Left cardiac atrium (tissue), 4 donors: ENCODE measurements at regions of chr20 and their contacts with region 1.

Region 1: GRCh38 chr20:43300901-43301300 is 111.2 kb upstream of the PTPRT start:
- DNase-seq: no peak
- ATAC-seq: no peak

Region 2: DNA sequence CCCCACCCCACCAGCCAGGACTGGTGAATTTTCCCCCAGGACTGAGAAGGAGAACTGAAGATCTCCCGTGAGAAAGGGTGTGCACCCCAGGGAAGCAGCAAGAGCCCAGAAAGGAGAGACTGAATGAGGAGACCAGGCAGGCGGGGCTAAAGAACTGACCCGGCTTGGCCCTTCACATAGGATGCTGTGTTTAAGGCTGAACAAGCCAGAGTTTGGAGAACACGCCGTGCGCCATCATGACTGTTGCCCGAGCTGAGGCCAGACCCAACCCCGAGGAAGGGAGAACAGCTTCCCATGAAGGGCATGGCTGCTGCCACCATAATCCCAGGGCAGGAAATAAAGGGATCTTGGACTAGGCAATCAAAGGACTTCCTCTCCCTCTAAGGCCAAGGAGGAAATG is 52.1 kb after region 1 on chr20:
- intact Hi-C with region 1: no loop called
- DNase-seq: no peak
- ATAC-seq: no peak

Region 3: DNA sequence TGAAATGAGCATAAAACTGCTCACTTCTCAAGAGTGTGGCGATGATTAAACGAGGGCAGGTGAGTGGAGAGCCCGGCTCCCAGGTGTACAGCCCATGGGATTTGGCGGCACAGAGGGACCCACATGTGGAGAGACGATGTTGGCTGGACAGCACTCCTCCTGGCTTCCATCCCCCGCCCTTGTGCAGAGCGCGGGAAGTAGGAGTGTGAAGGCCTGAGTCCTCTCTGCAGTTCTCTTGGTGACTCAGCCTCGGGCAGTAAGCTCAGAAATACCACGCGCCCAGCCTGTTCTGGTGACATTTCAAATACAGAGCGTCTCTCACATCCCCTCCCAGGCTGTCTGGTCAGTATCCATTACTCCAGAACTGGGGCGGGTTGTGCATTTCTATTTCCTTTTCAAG is 62.6 kb after region 1 on chr20:
- intact Hi-C with region 1: loop called in 1 of 2 experiments (anchors 10 kb)
- DNase-seq: no peak
- ATAC-seq: no peak

Region 4: DNA sequence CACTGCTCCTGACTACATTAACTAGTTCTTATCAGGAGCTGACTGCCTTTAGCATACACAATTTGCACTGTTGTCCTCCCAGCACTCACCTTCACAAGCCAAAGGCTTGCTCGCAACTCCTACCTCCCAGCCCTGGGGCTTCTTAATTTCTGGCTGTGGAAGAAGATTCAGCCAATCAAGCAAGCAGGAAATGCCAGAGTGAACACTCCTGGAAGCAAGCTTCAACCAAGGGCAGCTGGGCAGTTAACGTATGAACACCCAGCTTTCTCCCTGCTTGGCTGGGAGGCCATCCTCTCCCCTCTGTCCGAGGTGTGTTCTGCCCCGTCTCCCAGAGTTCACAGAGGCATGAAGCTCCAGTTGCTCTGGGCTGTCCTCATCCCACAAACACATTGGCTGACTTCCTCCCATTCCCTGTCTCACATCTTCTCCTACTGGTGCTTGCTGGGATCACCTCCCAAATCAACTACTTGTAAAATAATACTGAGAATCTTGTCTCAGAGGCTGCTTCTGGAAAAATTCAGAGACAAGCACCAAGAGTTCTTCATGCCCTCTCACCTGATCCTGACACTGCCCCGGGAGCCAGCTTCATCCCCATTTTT is 141.5 kb after region 1 on chr20:
- intact Hi-C with region 1: no loop called
- DNase-seq: no peak
- ATAC-seq: no peak